Sciatic nerve (tissue), 2 donors: ENCODE measurements at regions of chr5 and their contacts with region 1.

Region 1: DNA sequence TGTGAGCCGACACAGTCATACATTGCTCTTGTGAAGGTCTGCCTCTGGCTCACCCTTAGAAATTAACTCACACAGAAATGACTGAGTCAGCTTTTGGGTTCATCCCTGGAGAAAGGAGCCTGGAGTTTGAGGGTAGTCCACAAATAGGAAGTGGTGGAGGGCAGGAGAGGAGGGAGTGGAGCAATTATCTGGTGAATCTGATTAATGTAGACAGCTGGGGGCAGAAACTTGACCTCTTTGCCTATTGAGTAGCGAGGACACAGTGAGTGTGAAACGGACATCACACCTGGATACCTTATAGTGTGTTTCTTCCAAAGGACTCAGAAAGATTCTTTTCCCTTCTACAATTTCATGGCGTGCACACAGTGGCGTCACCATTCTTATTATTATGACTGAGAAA is 48.5 kb upstream of the MSX2 start:
- DNase-seq: no peak
- ATAC-seq: no peak

Region 2: DNA sequence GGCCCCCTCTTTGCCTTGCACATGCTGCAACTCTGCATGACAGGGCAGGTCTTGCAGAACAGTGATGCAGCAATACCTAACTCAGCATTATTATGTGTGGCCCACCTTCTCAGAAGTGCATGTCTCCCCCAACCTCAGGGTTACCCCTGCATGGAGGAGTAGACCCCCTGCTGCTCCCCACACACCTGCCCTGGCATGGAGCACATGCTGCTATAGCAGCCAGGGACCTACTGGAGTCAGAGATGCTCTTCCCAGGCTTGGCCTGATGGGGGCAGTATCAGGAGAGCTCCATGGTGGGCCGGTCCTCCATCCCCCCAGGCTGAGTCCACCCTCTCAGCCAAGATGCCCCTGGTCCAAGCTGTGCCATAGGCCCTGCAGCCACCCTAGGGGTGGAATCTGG is 1046.3 kb before region 1 on chr5:
- intact Hi-C with region 1: loop called (anchors 5 kb)
- DNase-seq: no peak
- ATAC-seq: no peak

Region 3: DNA sequence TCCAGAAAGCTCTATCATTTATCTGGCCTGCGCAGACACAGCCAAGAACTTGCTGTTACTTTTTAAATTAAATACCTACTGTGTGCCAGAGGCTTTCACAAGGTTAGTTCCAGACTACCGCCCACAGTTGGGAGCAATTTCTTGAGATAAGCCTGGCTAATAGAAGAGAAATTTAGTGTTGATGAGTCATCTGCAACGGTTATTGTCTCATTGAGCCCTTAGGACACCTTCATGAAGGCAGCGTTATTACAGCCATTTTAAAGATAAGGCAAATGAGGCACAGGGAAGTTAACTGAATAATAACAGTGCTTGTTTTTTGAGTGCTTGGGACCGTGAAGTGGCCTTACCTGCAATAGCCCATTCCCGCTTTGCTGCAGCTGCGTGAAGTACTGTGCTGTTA is 244.4 kb before region 1 on chr5:
- intact Hi-C with region 1: no loop called
- DNase-seq: no peak
- ATAC-seq: no peak